ENCODE measurements at regions of chr1 and their contacts with region 1.

Region 1: GRCh38 chr1:209937996-209938959 is at the start of gene SYT14:
- DNase-seq: peak; percentile 18
- ATAC-seq: peak; percentile 49
- H3K4me3 Mint-ChIP-seq: peak within 1 kb of the TSS; percentile 48
- H3K27ac Mint-ChIP-seq: no peak within 1 kb of the TSS
- H3K4me1 Mint-ChIP-seq: peaks cover 11% of the 10 kb centered on the region
- H3K27me3 Mint-ChIP-seq: peaks cover 57% of the 10 kb centered on the region
- total RNA-seq, gene SYT14: not detected

Region 2: DNA sequence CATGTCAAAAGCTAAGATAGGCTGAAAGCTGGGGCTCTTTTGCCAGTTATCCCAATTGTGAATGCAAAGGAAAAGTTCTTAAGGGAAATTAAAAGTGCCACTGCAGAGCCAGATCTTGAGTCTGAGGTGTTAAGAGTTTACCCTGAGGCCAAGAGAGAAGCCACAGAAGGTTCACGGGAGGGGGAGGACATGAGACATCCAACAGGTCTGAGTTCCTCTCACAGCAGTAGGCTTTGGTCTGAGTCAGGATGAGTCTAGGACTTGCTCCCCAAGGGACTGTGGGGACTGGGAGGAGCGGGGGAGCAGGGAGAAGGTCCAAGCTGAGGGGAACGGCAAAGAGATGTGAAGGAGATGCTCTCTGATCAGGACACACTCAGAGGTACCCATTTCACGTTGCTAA is 766.0 kb before region 1 on chr1:
- CTCF ChIA-PET with region 1: no interaction called
- POLR2A ChIA-PET with region 1: no interaction called
- intact Hi-C with region 1: loop called in 1 of 2 experiments (anchors 5 kb)
- DNase-seq: no peak
- ATAC-seq: no peak
- H3K4me3 Mint-ChIP-seq: no peak overlapping the region
- H3K27ac Mint-ChIP-seq: no peak overlapping the region
- H3K4me1 Mint-ChIP-seq: no peaks in the 10 kb centered on the region
- H3K27me3 Mint-ChIP-seq: no peaks in the 10 kb centered on the region

Region 3: GRCh38 chr1:210132582-210132981 is 194.3 kb after region 1 on chr1:
- CTCF ChIA-PET with region 1: no interaction called
- POLR2A ChIA-PET with region 1: no interaction called
- intact Hi-C with region 1: loop called in 1 of 2 experiments (anchors 2 kb)
- DNase-seq: peak; percentile 9
- ATAC-seq: no peak
- H3K4me3 Mint-ChIP-seq: no peak overlapping the region
- H3K27ac Mint-ChIP-seq: no peak overlapping the region
- H3K4me1 Mint-ChIP-seq: peaks cover 4% of the 10 kb centered on the region
- H3K27me3 Mint-ChIP-seq: peaks cover 12% of the 10 kb centered on the region